Mucosa of descending colon (tissue), 3 donors: ENCODE measurements at regions of chr22 and their contacts with region 1.

Region 1: DNA sequence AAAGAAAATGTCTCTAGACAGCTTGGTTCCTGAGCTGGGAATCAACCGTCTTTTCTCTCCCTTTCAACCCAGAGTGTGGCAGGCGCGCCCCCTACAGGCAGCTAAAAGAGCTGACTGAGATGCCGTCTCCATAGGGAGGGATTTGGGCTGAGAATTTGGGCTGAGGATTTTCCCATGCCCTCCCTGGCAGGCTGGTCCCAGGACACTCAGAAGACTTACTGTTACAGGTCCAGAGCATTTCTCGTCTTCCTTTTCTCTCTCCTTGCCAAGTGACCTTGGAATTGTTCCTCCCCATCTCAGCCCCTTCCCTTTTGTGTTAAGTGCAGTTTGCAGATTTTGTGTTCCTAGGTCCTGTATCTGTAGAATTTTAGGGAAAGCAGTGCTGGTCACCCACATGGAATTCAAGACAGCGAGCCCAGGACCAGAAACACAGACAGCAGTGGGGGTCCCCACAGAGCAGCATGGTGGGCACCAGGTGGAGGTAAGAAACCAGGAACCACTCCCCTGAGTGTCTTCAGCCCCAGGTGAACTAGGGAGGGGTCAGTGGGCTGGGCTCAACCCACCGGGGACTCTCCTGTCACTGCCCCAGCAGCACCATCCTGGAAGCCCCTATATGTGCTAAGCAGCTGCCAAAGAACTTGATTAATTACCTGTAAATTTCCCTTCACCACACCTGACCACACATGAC is 9.9 kb upstream of the IGLL5 start:
- DNase-seq: peak; percentile 57 to 81 (median 65)
- ATAC-seq: peak; percentile 63
- H3K4me3 ChIP-seq: no peak overlapping the region
- H3K4me1 ChIP-seq: no peaks in the 10 kb centered on the region
- CTCF ChIP-seq: peak; percentile 77

Region 2: GRCh38 chr22:22942511-22943329 is 65.1 kb after region 1 on chr22:
- intact Hi-C with region 1: loop called in 1 of 2 experiments (anchors 10 kb)
- DNase-seq: peak in 2 of 3 donors; percentile 62 to 87
- ATAC-seq: peak; percentile 85
- H3K4me3 ChIP-seq: no peak overlapping the region
- H3K4me1 ChIP-seq: no peaks in the 10 kb centered on the region
- CTCF ChIP-seq: peak; percentile 62